CD4-positive, alpha-beta T cell (primary cell): ENCODE measurements at regions of chr9 and their contacts with region 1.

Region 1: GRCh38 chr9:89505911-89506310 is 8.0 kb upstream of the SEMA4D start:
- DNase-seq: no peak
- ATAC-seq: no peak
- H3K4me3 ChIP-seq: no peak overlapping the region
- H3K4me3 Mint-ChIP-seq: no peak overlapping the region
- H3K27ac ChIP-seq: no peak overlapping the region
- H3K27ac Mint-ChIP-seq: no peak overlapping the region
- H3K4me1 ChIP-seq: peaks cover 54% of the 10 kb centered on the region
- H3K4me1 Mint-ChIP-seq: peaks cover 85% of the 10 kb centered on the region
- H3K27me3 ChIP-seq: no peaks in the 10 kb centered on the region
- H3K27me3 Mint-ChIP-seq: no peaks in the 10 kb centered on the region
- CTCF ChIP-seq: no peak

Region 2: DNA sequence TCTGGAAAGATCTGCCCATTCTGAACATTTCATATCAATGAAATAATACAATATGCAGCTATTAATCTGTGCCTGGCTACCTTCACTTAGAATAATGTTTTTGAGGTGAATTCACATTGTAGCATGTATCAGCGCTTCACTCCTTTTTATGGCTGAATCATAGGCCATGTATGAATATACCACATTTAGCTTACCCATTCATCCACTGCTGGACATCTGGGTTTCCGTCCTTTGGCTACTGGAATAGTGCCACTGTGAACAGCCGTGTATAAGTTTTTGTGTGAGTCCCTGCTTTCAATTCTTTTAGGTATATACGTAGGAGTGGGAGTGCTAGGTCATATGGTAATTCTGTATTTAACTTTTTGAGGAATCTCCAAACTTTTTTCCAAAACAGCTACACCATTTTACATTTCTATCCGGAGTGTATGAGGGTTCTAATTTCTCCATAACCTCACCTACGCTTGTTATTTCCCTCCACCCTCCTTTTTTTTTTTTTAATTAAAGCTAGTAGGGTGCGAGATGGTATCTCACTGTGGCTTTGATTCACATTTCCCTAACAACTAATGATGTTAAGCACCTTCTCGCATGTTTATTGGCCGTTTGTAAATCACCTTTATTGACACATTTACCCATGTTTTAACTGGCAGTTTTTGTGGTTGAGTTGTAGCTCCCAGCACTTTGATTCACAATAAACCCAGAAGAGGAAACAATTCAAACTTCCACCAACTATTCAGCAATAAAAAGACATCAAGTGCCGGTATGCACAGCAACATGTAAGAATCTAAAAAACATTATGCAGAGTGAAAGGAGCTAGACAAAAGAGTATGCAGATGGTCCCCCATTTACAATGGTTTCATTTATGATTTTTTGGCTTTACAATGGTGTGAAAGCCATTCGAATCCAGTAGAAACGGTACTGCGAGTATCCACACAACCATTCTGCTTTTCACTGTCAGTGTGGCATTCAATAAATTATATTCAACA is 16.1 kb before region 1 on chr9:
- CTCF ChIA-PET with region 1: interaction called, 3 read pairs
- POLR2A ChIA-PET with region 1: interaction called, 30 read pairs
- intact Hi-C with region 1: no loop called
- DNase-seq: peak in 4 of 14 experiments; percentile 33 to 92 (median 89)
- ATAC-seq: peak; percentile 84
- H3K4me3 ChIP-seq: peak overlapping the region; percentile 0
- H3K4me3 Mint-ChIP-seq: peak overlapping the region; percentile 76
- H3K27ac ChIP-seq: peak overlapping the region; percentile 65 to 67
- H3K27ac Mint-ChIP-seq: peak overlapping the region; percentile 88
- H3K4me1 ChIP-seq: peaks cover 76% of the 10 kb centered on the region
- H3K4me1 Mint-ChIP-seq: peaks cover 92% of the 10 kb centered on the region
- H3K27me3 ChIP-seq: no peaks in the 10 kb centered on the region
- H3K27me3 Mint-ChIP-seq: no peaks in the 10 kb centered on the region
- CTCF ChIP-seq: no peak

Region 3: GRCh38 chr9:89529243-89530035 is 23.5 kb after region 1 on chr9:
- CTCF ChIA-PET with region 1: no interaction called
- POLR2A ChIA-PET with region 1: interaction called, 39 read pairs
- intact Hi-C with region 1: loop called in 1 of 2 experiments (anchors 1 kb)
- DNase-seq: peak in 4 of 14 experiments; percentile 51 to 73 (median 52)
- ATAC-seq: peak; percentile 83
- H3K4me3 ChIP-seq: no peak overlapping the region
- H3K4me3 Mint-ChIP-seq: peak overlapping the region; percentile 36
- H3K27ac ChIP-seq: peak overlapping the region; percentile 23 to 27
- H3K27ac Mint-ChIP-seq: peak overlapping the region; percentile 94
- H3K4me1 ChIP-seq: peaks cover 98% of the 10 kb centered on the region
- H3K4me1 Mint-ChIP-seq: peaks cover 96% of the 10 kb centered on the region
- H3K27me3 ChIP-seq: no peaks in the 10 kb centered on the region
- H3K27me3 Mint-ChIP-seq: no peaks in the 10 kb centered on the region
- CTCF ChIP-seq: no peak

Region 4: DNA sequence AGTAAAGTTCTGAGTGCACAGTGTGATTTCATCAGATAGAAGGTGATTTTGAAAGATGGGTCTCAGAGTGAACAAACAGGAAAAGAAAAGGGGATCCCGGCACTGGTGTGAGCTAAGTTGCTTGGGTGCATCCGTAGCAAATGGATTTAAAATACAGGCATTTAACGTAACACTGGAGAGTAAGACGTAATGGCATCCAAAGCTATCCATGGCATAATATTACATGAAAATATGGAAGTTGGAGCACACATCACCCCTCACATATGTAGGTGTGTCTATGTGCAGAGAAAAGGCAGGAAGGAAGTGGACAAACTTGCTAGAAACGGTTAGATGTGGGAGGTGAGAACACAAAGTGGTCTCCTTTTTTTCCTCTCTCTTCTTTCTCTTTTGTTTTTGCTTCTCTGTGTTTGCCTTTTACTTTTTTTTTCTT is 30.2 kb after region 1 on chr9:
- CTCF ChIA-PET with region 1: no interaction called
- POLR2A ChIA-PET with region 1: interaction called, 18 read pairs
- intact Hi-C with region 1: loop called in 1 of 2 experiments (anchors 5 kb)
- DNase-seq: peak in 3 of 14 experiments; percentile 65 to 90 (median 66)
- ATAC-seq: peak; percentile 79
- H3K4me3 ChIP-seq: peak overlapping the region; percentile 11
- H3K4me3 Mint-ChIP-seq: peak overlapping the region; percentile 76
- H3K27ac ChIP-seq: peak overlapping the region; percentile 72 to 75
- H3K27ac Mint-ChIP-seq: peak overlapping the region; percentile 94
- H3K4me1 ChIP-seq: peaks cover 89% of the 10 kb centered on the region
- H3K4me1 Mint-ChIP-seq: peaks cover 95% of the 10 kb centered on the region
- H3K27me3 ChIP-seq: no peaks in the 10 kb centered on the region
- H3K27me3 Mint-ChIP-seq: no peaks in the 10 kb centered on the region
- CTCF ChIP-seq: no peak